ENCODE measurements at regions of chr12 and their contacts with region 1.

Region 1: DNA sequence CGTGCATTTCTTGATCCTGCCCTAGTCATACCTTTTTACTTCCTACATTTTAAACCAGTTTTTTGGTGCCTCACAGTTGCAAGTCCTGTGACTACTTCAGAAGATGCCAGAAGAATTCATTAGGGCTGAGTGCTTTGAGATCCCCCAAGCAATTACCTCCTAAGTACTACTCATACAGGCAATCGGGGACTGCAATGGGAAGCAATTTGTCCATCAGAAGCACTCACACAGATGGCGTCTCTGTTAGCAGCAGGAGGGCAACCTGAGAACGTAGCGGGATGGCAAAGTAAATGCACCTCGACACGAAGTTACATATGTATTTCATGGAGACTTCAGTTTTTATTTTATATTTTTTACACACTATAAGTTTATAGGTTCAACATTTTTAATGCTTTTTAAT is 188.3 kb downstream of the CAPZA3 start:
- DNase-seq: no peak
- ATAC-seq: no peak
- H3K4me3 ChIP-seq: no peak overlapping the region
- H3K27ac ChIP-seq: no peak overlapping the region
- H3K4me1 ChIP-seq: no peaks in the 10 kb centered on the region
- H3K27me3 ChIP-seq: peaks cover 7% of the 10 kb centered on the region; the same call in 1 of the 2 replicates
- CTCF ChIP-seq: no peak
- POLR2A ChIP-seq: no peak
- RAD21 ChIP-seq: no peak

Region 2: DNA sequence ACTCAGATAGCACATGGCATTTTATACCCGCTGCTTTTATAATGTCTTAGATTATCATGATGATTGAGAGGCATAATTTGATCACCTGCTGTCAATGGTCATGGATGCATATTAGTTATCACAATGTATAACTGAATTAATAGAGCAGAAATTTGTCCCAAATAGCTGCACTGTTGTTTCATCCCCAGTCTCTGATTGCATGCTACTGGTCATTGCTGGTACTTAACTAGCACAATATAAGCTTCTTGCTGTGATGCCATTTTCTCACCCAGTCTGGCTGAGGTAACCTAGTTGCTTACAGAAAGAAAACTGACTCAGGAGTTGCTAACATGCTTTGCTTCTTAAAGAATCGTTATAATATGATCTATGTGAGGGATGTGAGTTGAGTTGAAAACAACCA is 126.5 kb after region 1 on chr12:
- CTCF ChIA-PET with region 1: no interaction called
- POLR2A ChIA-PET with region 1: no interaction called
- dilution Hi-C with region 1: no loop called
- in situ Hi-C with region 1: no loop called
- intact Hi-C with region 1: loop called (anchors 5 kb)
- DNase-seq: no peak
- ATAC-seq: no peak
- H3K4me3 ChIP-seq: no peak overlapping the region
- H3K27ac ChIP-seq: no peak overlapping the region
- H3K4me1 ChIP-seq: no peaks in the 10 kb centered on the region
- H3K27me3 ChIP-seq: no peaks in the 10 kb centered on the region
- CTCF ChIP-seq: no peak
- POLR2A ChIP-seq: no peak
- RAD21 ChIP-seq: no peak

Measured in IMR-90 (cell line).